ENCODE measurements at regions of chr2 and their contacts with region 1.

Region 1: DNA sequence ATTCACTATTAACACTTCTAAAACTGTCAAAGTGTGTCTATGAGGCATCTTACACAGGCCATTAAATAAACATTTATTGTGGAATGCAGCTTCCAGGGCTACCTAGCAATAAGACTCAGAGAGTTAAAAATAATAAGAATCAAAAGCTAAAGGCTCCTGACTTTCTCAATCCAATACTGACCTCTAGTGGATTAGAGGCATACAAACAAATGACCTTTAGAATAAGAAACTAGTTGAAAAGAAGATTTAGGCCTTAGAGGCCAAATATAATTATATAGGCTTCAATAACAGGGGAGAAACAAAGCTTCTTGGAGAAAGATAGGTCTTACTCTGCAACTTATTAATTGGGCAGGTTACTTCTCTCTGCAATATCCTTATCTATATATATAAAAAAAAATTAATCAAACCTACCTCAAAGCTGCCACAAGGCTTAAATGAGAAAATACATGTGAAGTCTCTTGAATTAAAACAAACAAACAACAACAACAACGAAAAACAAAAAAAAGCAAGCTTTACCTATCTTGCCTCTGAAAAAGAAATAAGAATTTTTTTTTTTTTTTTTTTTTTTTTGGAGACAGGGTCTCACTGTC is 246.1 kb downstream of the EXOC6B start:
- DNase-seq: peak in 6 of 9 donors; percentile 0 to 32 (median 10)
- ATAC-seq: no peak
- H3K4me3 ChIP-seq: no peak overlapping the region
- H3K4me3 Mint-ChIP-seq: no peak overlapping the region
- H3K27ac ChIP-seq: no peak overlapping the region
- H3K27ac Mint-ChIP-seq: no peak overlapping the region
- H3K4me1 ChIP-seq: no peaks in the 10 kb centered on the region
- H3K4me1 Mint-ChIP-seq: peaks cover 0 to 8% (median 0%) of the 10 kb centered on the region in 7 donors
- H3K27me3 ChIP-seq: no peaks in the 10 kb centered on the region
- H3K27me3 Mint-ChIP-seq: peaks cover 0 to 3% (median 0%) of the 10 kb centered on the region in 5 donors

Region 2: DNA sequence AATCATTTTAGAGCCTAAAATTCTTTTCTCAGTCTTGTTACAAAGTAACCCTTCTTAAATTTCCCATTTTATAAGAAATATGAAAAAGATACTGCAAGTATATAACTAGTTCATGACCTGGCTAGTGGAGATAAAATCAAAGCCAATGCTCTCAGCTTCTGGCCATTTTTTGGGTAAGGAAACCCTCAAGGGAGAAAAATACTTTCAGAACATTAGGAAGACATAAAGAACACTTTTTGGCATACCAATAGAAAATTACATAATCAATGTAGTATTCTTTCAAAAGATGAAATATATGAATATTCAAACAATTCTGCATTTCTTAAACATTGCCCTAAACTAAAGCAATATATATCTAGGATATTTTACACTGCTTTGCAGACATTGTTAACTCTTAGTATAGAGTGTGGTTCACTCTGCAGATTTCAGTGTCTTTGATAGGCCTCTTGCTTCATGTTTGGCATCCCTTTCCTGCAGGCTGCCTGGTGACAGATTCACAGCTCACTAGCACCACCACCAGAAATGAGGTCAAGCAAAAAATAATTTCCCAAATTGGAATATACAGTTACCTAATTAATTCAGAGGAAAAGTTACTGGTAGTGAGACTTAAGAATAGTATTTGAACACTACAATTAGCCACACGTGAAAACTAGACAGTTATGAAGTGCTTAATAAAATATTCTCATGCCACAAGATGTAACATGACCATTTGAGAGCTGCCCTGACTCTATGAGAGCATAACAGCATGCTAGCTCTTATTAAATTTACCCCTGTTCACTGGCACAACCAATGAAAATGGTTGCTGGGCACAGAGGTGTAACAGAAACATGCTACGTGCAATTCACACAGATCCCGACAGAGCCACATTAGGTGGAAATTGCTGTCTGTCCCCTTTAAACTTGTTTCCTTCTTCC is 1388.8 kb before region 1 on chr2:
- CTCF ChIA-PET with region 1: no interaction called
- POLR2A ChIA-PET with region 1: no interaction called
- intact Hi-C with region 1: no loop called
- DNase-seq: no peak
- ATAC-seq: no peak
- H3K4me3 ChIP-seq: no peak overlapping the region
- H3K4me3 Mint-ChIP-seq: no peak overlapping the region
- H3K27ac ChIP-seq: no peak overlapping the region
- H3K27ac Mint-ChIP-seq: no peak overlapping the region
- H3K4me1 ChIP-seq: no peaks in the 10 kb centered on the region
- H3K4me1 Mint-ChIP-seq: no peaks in the 10 kb centered on the region
- H3K27me3 ChIP-seq: no peaks in the 10 kb centered on the region
- H3K27me3 Mint-ChIP-seq: peaks cover 0 to 8% (median 0%) of the 10 kb centered on the region in 5 donors

Region 3: DNA sequence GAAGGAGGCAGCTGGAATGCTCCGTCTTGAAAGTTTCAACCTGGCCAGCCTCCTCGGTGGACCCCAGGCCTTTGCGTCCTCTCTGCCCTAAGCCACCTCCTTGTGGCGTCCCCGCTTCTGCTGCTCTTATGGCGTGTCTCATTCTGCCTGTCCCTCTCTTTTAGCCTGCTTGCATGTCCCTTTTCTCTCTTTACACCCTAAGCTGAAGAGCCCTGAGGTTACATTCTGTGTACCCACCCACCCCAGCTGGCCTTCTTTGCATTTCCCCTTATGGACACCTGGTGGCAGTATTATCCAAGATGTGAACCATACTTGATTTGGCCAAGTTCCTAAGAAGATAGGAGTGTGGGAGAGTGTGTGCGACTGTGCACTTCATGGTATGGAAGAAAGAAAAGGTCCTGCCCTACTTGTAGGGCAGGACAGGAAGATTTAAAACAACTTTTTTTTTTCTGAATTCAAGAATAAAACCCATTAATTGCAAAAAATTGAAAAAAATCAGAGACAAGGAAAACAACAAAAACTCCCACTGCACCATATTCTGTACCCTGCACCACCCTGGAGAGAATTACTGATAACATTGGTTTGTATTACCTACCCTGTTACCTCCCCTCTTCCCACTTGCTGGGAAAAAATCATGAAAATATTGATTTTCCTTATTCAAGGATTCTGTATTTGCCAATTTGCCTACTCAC is 1048.9 kb before region 1 on chr2:
- CTCF ChIA-PET with region 1: no interaction called
- POLR2A ChIA-PET with region 1: no interaction called
- intact Hi-C with region 1: loop called in 1 of 2 experiments (anchors 5 kb)
- DNase-seq: no peak
- ATAC-seq: peak; percentile 54
- H3K4me3 ChIP-seq: no peak overlapping the region
- H3K4me3 Mint-ChIP-seq: no peak overlapping the region
- H3K27ac ChIP-seq: no peak overlapping the region
- H3K27ac Mint-ChIP-seq: no peak overlapping the region
- H3K4me1 ChIP-seq: no peaks in the 10 kb centered on the region
- H3K4me1 Mint-ChIP-seq: peaks cover 0 to 5% (median 0%) of the 10 kb centered on the region in 7 donors
- H3K27me3 ChIP-seq: no peaks in the 10 kb centered on the region
- H3K27me3 Mint-ChIP-seq: peaks cover 8 to 66% (median 42%) of the 10 kb centered on the region in 5 donors

Region 4: GRCh38 chr2:71923887-71924533 is 655.7 kb before region 1 on chr2:
- CTCF ChIA-PET with region 1: interaction called, 10 read pairs
- POLR2A ChIA-PET with region 1: no interaction called
- intact Hi-C with region 1: no loop called
- DNase-seq: peak in 7 of 9 donors; percentile 28 to 47 (median 36)
- ATAC-seq: peak; percentile 45
- H3K4me3 ChIP-seq: no peak overlapping the region
- H3K4me3 Mint-ChIP-seq: no peak overlapping the region
- H3K27ac ChIP-seq: no peak overlapping the region
- H3K27ac Mint-ChIP-seq: no peak overlapping the region
- H3K4me1 ChIP-seq: no peaks in the 10 kb centered on the region
- H3K4me1 Mint-ChIP-seq: no peaks in the 10 kb centered on the region
- H3K27me3 ChIP-seq: no peaks in the 10 kb centered on the region
- H3K27me3 Mint-ChIP-seq: peaks cover 0 to 3% (median 0%) of the 10 kb centered on the region in 5 donors

Measured in naive thymus-derived CD4-positive, alpha-beta T cell (primary cell).